ENCODE measurements at regions of chr1 and their contacts with region 1.

Region 1: GRCh38 chr1:36099681-36100341 is 11.1 kb downstream of the ADPRS start:
- DNase-seq: peak; percentile 58 to 83 (median 72)
- H3K4me3 ChIP-seq: no peak overlapping the region
- H3K4me3 Mint-ChIP-seq: peak overlapping the region in 2 of 7 donors; percentile 39 to 54
- H3K27ac ChIP-seq: no peak overlapping the region
- H3K27ac Mint-ChIP-seq: peak overlapping the region in 3 of 8 donors; percentile 29 to 90 (median 71)
- H3K4me1 ChIP-seq: no peaks in the 10 kb centered on the region
- H3K4me1 Mint-ChIP-seq: peaks cover 0 to 7% (median 4%) of the 10 kb centered on the region in 3 donors
- H3K27me3 ChIP-seq: no peaks in the 10 kb centered on the region
- H3K27me3 Mint-ChIP-seq: no peaks in the 10 kb centered on the region

Region 2: GRCh38 chr1:36134505-36135329 is 34.9 kb after region 1 on chr1:
- CTCF ChIA-PET with region 1: interaction called, 76 read pairs
- POLR2A ChIA-PET with region 1: no interaction called
- DNase-seq: no peak
- H3K4me3 ChIP-seq: no peak overlapping the region
- H3K4me3 Mint-ChIP-seq: no peak overlapping the region
- H3K27ac ChIP-seq: no peak overlapping the region
- H3K27ac Mint-ChIP-seq: peak overlapping the region in 2 of 8 donors; percentile 58 to 76
- H3K4me1 ChIP-seq: no peaks in the 10 kb centered on the region
- H3K4me1 Mint-ChIP-seq: peaks cover 0 to 8% (median 3%) of the 10 kb centered on the region in 3 donors
- H3K27me3 ChIP-seq: no peaks in the 10 kb centered on the region
- H3K27me3 Mint-ChIP-seq: no peaks in the 10 kb centered on the region

Region 3: DNA sequence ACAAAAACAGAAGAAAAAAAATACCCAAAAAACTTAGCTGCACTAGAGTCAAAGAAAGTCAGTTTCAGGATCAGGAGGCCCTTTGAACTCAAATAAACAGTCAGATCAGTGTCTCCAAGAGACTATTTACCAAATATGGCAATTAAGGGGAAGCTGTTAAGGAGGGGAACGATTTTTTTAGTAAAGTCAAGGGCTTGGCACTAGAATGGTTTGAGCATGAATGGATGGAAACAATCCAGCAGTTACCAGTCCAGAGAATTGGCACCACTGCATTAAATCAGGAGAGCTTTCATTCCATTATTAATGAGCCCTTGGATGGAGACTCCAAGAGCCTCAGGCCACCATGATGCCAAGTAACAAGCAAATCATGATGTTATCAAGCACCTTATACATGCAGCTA is 42.3 kb after region 1 on chr1:
- CTCF ChIA-PET with region 1: interaction called, 76 read pairs
- POLR2A ChIA-PET with region 1: no interaction called
- DNase-seq: no peak
- H3K4me3 ChIP-seq: no peak overlapping the region
- H3K4me3 Mint-ChIP-seq: no peak overlapping the region
- H3K27ac ChIP-seq: no peak overlapping the region
- H3K27ac Mint-ChIP-seq: peak overlapping the region in 2 of 8 donors; percentile 56 to 66
- H3K4me1 ChIP-seq: no peaks in the 10 kb centered on the region
- H3K4me1 Mint-ChIP-seq: peaks cover 26 to 51% (median 50%) of the 10 kb centered on the region in 3 donors
- H3K27me3 ChIP-seq: no peaks in the 10 kb centered on the region
- H3K27me3 Mint-ChIP-seq: peaks cover 0 to 1% of the 10 kb centered on the region in 2 donors